ENCODE measurements at regions of chr11 and their contacts with region 1.

Region 1: GRCh38 chr11:6812390-6813005 is 13.0 kb upstream of the OR6A2 start:
- DNase-seq: peak; percentile 48
- H3K4me3 ChIP-seq: no peak overlapping the region
- H3K27ac ChIP-seq: no peak overlapping the region
- H3K4me1 ChIP-seq: no peaks in the 10 kb centered on the region
- H3K27me3 ChIP-seq: no peaks in the 10 kb centered on the region
- CTCF ChIP-seq: peak; percentile 83 to 88
- POLR2A ChIP-seq: no peak

Region 2: DNA sequence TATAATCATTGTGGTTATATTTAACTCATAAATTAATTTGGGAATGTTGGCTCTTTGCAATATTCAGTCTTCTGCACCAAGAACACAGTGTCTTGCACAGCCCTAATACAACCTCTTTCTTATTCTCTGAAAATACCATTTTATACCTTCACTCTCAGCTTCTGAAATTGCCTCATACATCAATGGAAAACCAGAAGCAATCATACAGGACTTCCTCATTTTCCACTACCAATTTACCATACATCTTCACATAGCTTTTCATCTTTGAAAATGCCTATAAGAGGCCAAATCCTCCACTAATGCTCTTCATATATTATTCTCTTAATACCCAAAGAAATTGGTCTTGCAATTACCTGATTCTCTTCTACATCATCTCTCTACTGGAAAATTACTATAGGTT is 34.0 kb before region 1 on chr11:
- CTCF ChIA-PET with region 1: no interaction called
- POLR2A ChIA-PET with region 1: no interaction called
- dilution Hi-C with region 1: no loop called
- intact Hi-C with region 1: no loop called
- DNase-seq: no peak
- H3K4me3 ChIP-seq: no peak overlapping the region
- H3K27ac ChIP-seq: no peak overlapping the region
- H3K4me1 ChIP-seq: no peaks in the 10 kb centered on the region
- H3K27me3 ChIP-seq: no peaks in the 10 kb centered on the region
- CTCF ChIP-seq: no peak
- POLR2A ChIP-seq: no peak

Region 3: GRCh38 chr11:6790546-6790945 is 22.0 kb before region 1 on chr11:
- CTCF ChIA-PET with region 1: interaction called, 10 read pairs
- POLR2A ChIA-PET with region 1: no interaction called
- dilution Hi-C with region 1: no loop called
- intact Hi-C with region 1: no loop called
- DNase-seq: no peak
- H3K4me3 ChIP-seq: no peak overlapping the region
- H3K27ac ChIP-seq: no peak overlapping the region
- H3K4me1 ChIP-seq: no peaks in the 10 kb centered on the region
- H3K27me3 ChIP-seq: peaks cover 0 to 2% of the 10 kb centered on the region in 2 experiments
- CTCF ChIP-seq: no peak
- POLR2A ChIP-seq: no peak

Region 4: DNA sequence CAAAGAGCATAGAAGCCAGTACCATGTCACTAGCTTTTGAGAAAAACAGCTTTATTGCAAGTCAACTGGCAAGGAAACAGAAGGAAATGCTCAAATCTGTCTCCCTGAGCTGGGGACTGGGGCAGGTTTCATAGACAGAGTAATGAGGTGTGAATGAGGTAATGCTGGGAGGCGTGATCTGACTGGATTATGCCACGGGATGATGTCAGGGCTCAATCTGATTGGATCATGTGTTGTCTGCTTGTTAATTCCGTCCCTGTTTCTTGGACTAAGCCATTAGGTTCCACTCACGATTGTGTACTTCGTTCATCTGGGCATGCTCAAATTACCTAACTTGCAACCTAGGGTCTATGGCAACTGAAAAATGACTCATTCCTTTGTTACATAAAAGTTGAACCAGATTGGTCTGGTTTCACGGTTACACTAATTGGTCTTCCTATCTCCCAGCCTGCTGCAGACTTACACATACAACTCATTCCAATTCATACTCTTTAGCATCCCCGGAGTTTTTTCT is 12.8 kb after region 1 on chr11:
- CTCF ChIA-PET with region 1: interaction called, 27 read pairs
- POLR2A ChIA-PET with region 1: no interaction called
- dilution Hi-C with region 1: no loop called
- intact Hi-C with region 1: no loop called
- DNase-seq: no peak
- H3K4me3 ChIP-seq: no peak overlapping the region
- H3K27ac ChIP-seq: no peak overlapping the region
- H3K4me1 ChIP-seq: no peaks in the 10 kb centered on the region
- H3K27me3 ChIP-seq: no peaks in the 10 kb centered on the region
- CTCF ChIP-seq: no peak
- POLR2A ChIP-seq: no peak

Region 5: DNA sequence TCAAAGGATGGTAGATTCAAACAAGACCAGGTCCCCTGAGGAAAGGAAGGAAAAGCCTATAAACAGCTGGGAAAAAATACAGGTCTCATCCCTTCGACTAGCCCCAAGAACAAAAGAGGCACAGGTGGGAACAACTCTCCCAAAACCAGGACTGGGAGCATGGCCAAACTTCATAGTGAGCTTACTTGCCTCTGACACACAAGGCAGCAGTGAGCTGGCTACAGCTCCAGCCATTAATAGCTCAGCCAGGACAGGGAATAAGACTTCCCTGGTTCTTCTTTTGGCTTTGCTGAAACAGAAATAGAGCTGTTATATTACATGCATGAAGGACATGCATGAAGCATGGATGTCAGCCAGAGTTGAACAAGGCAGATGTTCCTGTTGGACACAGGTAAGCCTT is 50.5 kb after region 1 on chr11 and contains the start of gene OR10A2:
- CTCF ChIA-PET with region 1: interaction called, 13 read pairs
- POLR2A ChIA-PET with region 1: no interaction called
- dilution Hi-C with region 1: no loop called
- intact Hi-C with region 1: no loop called
- DNase-seq: no peak
- H3K4me3 ChIP-seq: no peak within 1 kb of the TSS
- H3K27ac ChIP-seq: no peak within 1 kb of the TSS
- H3K4me1 ChIP-seq: no peaks in the 10 kb centered on the region
- H3K27me3 ChIP-seq: peaks cover 0 to 1% of the 10 kb centered on the region in 2 experiments
- CTCF ChIP-seq: no peak
- POLR2A ChIP-seq: no peak
- total RNA-seq, gene OR10A2: not detected in 2 replicates

Region 6: GRCh38 chr11:7088921-7089320 is 276.4 kb after region 1 on chr11 and contains the start of gene RBMXL2:
- CTCF ChIA-PET with region 1: interaction called, 11 read pairs
- POLR2A ChIA-PET with region 1: no interaction called
- dilution Hi-C with region 1: no loop called
- intact Hi-C with region 1: no loop called
- DNase-seq: no peak
- H3K4me3 ChIP-seq: no peak within 1 kb of the TSS
- H3K27ac ChIP-seq: no peak within 1 kb of the TSS
- H3K4me1 ChIP-seq: no peaks in the 10 kb centered on the region
- H3K27me3 ChIP-seq: peaks cover 0 to 3% of the 10 kb centered on the region in 2 experiments
- CTCF ChIP-seq: peak in 1 of 2 donors; percentile 12
- POLR2A ChIP-seq: no peak
- total RNA-seq, gene RBMXL2: 0.51 TPM in 1 of 2 replicates, not detected in the other

Region 7: DNA sequence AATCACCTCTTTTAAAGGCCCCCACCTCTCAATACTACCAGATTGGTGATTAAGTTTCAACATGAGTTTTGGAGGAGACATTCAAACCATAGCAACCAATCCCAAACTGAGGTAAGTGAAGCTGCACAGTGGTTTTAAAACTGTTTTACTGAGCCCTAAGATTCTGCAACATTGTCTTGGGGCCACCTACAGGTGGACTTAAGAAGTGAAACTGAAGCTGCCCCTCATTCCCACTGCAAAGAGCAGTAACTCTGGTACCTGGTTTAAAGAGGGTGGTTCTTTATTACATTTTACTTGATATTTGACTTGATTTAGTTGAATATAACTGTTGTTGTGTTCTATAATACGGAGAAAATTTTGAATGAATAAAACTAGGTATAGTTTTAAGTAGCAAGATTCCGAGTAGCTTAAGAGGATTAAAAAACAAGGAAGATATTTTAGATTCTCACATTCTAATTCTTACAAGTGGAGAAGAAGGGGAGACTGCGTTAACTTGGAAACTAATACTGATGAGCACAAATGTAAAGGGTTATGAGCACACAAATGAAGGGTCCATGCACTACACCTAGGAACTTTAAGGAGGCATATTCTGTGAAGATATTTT is 465.9 kb after region 1 on chr11:
- CTCF ChIA-PET with region 1: interaction called, 61 read pairs
- POLR2A ChIA-PET with region 1: no interaction called
- dilution Hi-C with region 1: no loop called
- intact Hi-C with region 1: loop called (anchors 2 kb)
- DNase-seq: peak; percentile 42
- H3K4me3 ChIP-seq: no peak overlapping the region
- H3K27ac ChIP-seq: no peak overlapping the region
- H3K4me1 ChIP-seq: no peaks in the 10 kb centered on the region
- H3K27me3 ChIP-seq: no peaks in the 10 kb centered on the region
- CTCF ChIP-seq: peak; percentile 46 to 64
- POLR2A ChIP-seq: no peak